ENCODE measurements at regions of chr19 and their contacts with region 1.

Region 1: DNA sequence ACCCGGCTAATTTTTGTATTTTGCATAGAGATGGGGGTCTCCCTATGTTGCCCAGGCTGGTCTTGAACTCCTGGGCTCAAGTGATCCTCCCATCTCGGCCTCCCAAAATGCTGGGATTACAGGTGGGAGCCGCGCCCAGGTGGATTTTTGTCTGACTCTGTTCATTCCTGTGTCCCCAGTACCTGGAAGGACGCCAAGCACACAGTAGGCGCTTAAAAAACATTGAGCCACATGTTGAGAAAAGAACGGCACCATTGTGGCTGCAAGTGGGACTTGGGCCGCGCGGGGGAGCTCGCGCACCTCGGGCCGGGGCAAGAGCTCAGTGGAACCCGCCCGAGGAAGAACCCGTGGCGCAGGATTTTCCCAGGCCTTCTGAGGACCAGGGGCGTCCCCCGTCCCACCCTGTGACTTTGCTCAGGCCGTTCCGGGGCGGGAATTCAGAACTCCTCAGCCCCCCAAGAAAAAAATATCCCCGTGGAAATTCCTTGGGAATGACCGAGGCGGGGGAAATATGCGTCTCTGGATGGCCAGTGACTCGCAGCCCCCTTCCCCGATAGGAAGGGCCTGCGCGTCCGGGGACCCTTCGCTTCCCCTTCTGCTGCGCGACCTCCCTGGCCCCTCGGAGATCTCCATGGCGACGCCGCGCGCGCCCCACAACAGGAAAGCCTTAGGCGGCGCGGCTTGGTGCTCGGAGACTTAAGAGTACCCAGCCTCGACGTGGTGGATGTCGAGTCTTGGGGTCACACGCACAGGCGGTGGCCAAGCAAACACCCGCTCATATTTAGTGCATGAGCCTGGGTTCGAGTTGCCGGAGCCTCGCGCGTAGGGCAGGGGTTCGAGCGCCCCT is 1.4 kb upstream of the ICAM1 start:
- DNase-seq: peak; percentile 80 to 94 (median 88)
- H3K4me3 ChIP-seq: peak overlapping the region in 2 of 3 donors; percentile 61
- H3K27ac ChIP-seq: peak overlapping the region; percentile 87 to 90
- H3K4me1 ChIP-seq: peaks cover 0 to 9% (median 0%) of the 10 kb centered on the region in 3 donors
- H3K27me3 ChIP-seq: peaks cover 9% of the 10 kb centered on the region
- CTCF ChIP-seq: peak; percentile 93

Region 2: GRCh38 chr19:10390652-10391286 is 121.2 kb after region 1 on chr19:
- intact Hi-C with region 1: loop called (anchors 5 kb)
- DNase-seq: peak in 4 of 5 donors; percentile 58 to 78 (median 73)
- H3K4me3 ChIP-seq: no peak overlapping the region
- H3K27ac ChIP-seq: no peak overlapping the region
- H3K4me1 ChIP-seq: no peaks in the 10 kb centered on the region
- H3K27me3 ChIP-seq: no peaks in the 10 kb centered on the region
- CTCF ChIP-seq: peak; percentile 78

Region 3: GRCh38 chr19:10450191-10450852 is 180.8 kb after region 1 on chr19:
- intact Hi-C with region 1: no loop called
- DNase-seq: no peak
- H3K4me3 ChIP-seq: no peak overlapping the region
- H3K27ac ChIP-seq: no peak overlapping the region
- H3K4me1 ChIP-seq: no peaks in the 10 kb centered on the region
- H3K27me3 ChIP-seq: no peaks in the 10 kb centered on the region
- CTCF ChIP-seq: no peak

Measured in kidney (tissue), 22 donors.